MCF 10A (cell line): ENCODE measurements at regions of chr2 and their contacts with region 1.

Region 1: GRCh38 chr2:237590272-237591140 is at the start of gene RAB17:
- DNase-seq: peak; percentile 71
- H3K4me3 Mint-ChIP-seq: peak within 1 kb of the TSS; percentile 77
- H3K27ac Mint-ChIP-seq: peak within 1 kb of the TSS; percentile 90
- H3K4me1 Mint-ChIP-seq: peaks cover 13% of the 10 kb centered on the region
- H3K27me3 Mint-ChIP-seq: no peaks in the 10 kb centered on the region
- CTCF ChIP-seq: no peak
- total RNA-seq, gene RAB17: 10.6 and 17.2 TPM in 2 replicates

Region 2: DNA sequence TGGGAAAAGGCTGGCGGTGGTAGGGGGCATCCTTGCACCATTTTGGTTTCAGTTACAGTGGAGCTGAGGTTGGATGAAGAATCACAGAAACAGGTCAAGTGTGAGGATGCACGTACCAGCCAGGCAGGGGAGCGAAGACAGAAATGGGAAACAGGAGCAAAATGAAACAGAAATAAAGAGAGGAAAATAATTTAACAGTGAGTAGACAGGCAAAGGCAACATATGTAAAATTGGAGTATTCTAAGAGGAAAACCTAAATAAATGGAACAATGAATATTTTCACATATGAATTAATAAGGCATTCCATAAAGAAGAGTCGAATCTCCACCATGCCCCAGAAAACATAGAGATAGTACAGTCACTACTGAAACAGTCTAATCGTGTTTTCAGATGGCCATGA is 66.6 kb after region 1 on chr2:
- CTCF ChIA-PET with region 1: no interaction called
- POLR2A ChIA-PET with region 1: interaction called, 9 read pairs
- intact Hi-C with region 1: loop called (anchors 5 kb)
- DNase-seq: no peak
- H3K4me3 Mint-ChIP-seq: no peak overlapping the region
- H3K27ac Mint-ChIP-seq: no peak overlapping the region
- H3K4me1 Mint-ChIP-seq: no peaks in the 10 kb centered on the region
- H3K27me3 Mint-ChIP-seq: peaks cover 14% of the 10 kb centered on the region
- CTCF ChIP-seq: no peak